Activated B cell treated with CpG ODN at 0.5 μM for 24 hours (primary cell): ENCODE measurements at regions of chr1 and their contacts with region 1.

Region 1: GRCh38 chr1:16366722-16367257 is at the start of gene SZRD1:
- DNase-seq: peak; percentile 84
- ATAC-seq: peak; percentile 83
- H3K4me3 Mint-ChIP-seq: peak within 1 kb of the TSS; percentile 99
- H3K27ac Mint-ChIP-seq: peak within 1 kb of the TSS; percentile 99
- H3K4me1 Mint-ChIP-seq: peaks cover 38% of the 10 kb centered on the region
- H3K27me3 Mint-ChIP-seq: no peaks in the 10 kb centered on the region
- CTCF ChIP-seq: no peak
- total RNA-seq, gene SZRD1: 184 and 190 TPM in 2 replicates

Region 2: GRCh38 chr1:16078925-16079656 is 287.7 kb before region 1 on chr1:
- CTCF ChIA-PET with region 1: interaction called, 19 read pairs
- POLR2A ChIA-PET with region 1: no interaction called
- intact Hi-C with region 1: loop called (anchors 1 kb)
- DNase-seq: peak; percentile 63
- ATAC-seq: peak; percentile 86
- H3K4me3 Mint-ChIP-seq: peak overlapping the region; percentile 75
- H3K27ac Mint-ChIP-seq: no peak overlapping the region
- H3K4me1 Mint-ChIP-seq: peaks cover 9% of the 10 kb centered on the region
- H3K27me3 Mint-ChIP-seq: peaks cover 6% of the 10 kb centered on the region
- CTCF ChIP-seq: peak; percentile 27

Region 3: GRCh38 chr1:16260814-16261213 is 106.0 kb before region 1 on chr1:
- CTCF ChIA-PET with region 1: no interaction called
- POLR2A ChIA-PET with region 1: no interaction called
- intact Hi-C with region 1: no loop called
- DNase-seq: no peak
- ATAC-seq: no peak
- H3K4me3 Mint-ChIP-seq: no peak overlapping the region
- H3K27ac Mint-ChIP-seq: no peak overlapping the region
- H3K4me1 Mint-ChIP-seq: no peaks in the 10 kb centered on the region
- H3K27me3 Mint-ChIP-seq: no peaks in the 10 kb centered on the region
- CTCF ChIP-seq: no peak

Region 4: DNA sequence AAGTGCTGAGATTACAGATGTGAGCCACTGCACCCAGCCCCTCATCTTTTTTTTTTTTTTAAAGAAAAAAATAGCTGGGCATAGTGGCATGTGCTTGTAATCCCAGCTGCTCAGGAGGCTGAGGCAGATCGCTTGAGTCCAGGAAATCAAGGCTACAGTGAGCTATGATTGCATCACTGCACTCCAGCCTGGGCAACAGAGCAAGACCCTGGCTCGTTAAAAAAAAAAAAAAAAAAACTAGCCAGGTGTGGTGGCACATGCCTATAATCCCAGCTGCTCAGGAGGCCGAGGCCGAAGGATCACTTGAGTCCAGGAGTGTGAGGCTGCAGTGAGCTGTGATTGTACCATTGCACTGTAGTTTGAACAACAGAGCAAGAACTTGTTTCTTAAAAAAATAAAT is 14.1 kb after region 1 on chr1:
- CTCF ChIA-PET with region 1: interaction called, 6 read pairs
- POLR2A ChIA-PET with region 1: interaction called, 49 read pairs
- intact Hi-C with region 1: no loop called
- DNase-seq: no peak
- ATAC-seq: no peak
- H3K4me3 Mint-ChIP-seq: no peak overlapping the region
- H3K27ac Mint-ChIP-seq: no peak overlapping the region
- H3K4me1 Mint-ChIP-seq: peaks cover 65% of the 10 kb centered on the region
- H3K27me3 Mint-ChIP-seq: no peaks in the 10 kb centered on the region
- CTCF ChIP-seq: no peak

Region 5: DNA sequence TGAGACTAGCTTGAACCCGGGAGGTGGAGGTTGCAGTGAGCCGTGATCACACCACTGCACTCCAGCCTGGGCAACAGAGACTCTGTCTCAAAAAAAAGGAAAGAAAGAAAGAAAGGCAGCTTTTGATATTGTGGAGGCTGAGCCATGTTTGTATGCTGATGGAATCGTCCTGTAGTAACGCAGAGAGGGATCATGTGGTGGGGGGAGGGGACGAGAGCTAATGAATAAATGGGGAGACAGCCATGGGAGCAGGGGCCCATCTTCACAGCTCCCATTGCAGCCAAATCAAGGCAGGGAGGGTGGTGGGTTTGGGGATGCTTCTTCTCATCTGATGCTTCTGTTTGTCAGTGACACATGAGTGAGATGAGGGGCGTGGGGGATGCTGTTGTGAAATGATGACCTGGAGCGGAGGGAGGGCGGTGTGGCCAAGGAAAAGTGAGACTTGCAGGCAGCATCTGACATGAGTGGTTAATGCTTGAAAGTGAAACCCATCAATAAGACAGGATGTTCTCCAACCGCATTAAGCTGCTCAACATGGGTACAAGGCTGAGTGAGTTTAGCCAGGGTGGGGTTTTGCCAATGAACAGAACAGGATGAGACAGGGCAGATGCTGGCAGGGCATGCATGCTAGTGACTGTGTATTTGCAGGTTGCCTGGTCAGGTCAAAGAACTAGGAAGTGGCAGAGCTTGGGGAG is 53.8 kb after region 1 on chr1:
- CTCF ChIA-PET with region 1: interaction called, 4 read pairs
- POLR2A ChIA-PET with region 1: interaction called, 14 read pairs
- intact Hi-C with region 1: loop called (anchors 1 kb)
- DNase-seq: no peak
- ATAC-seq: peak; percentile 97
- H3K4me3 Mint-ChIP-seq: peak overlapping the region; percentile 48
- H3K27ac Mint-ChIP-seq: peak overlapping the region; percentile 84
- H3K4me1 Mint-ChIP-seq: peaks cover 31% of the 10 kb centered on the region
- H3K27me3 Mint-ChIP-seq: no peaks in the 10 kb centered on the region
- CTCF ChIP-seq: no peak

Region 6: GRCh38 chr1:16644193-16644481 is 277.3 kb after region 1 on chr1:
- CTCF ChIA-PET with region 1: no interaction called
- POLR2A ChIA-PET with region 1: no interaction called
- intact Hi-C with region 1: loop called (anchors 1 kb)
- DNase-seq: no peak
- ATAC-seq: peak; percentile 40
- H3K4me3 Mint-ChIP-seq: no peak overlapping the region
- H3K27ac Mint-ChIP-seq: no peak overlapping the region
- H3K4me1 Mint-ChIP-seq: peaks cover 4% of the 10 kb centered on the region
- H3K27me3 Mint-ChIP-seq: no peaks in the 10 kb centered on the region
- CTCF ChIP-seq: no peak